T-cell (primary cell): ENCODE measurements at regions of chr4 and their contacts with region 1.

Region 1: GRCh38 chr4:98143001-98143899 is at the start of gene STPG2:
- DNase-seq: peak; percentile 82 to 96 (median 90)
- ATAC-seq: peak; percentile 98 to 100 (median 99)
- H3K4me3 ChIP-seq: peak within 1 kb of the TSS; percentile 62 to 67
- H3K4me3 Mint-ChIP-seq: peak within 1 kb of the TSS; percentile 89 to 95 (median 93)
- H3K27ac ChIP-seq: peak within 1 kb of the TSS; percentile 83
- H3K27ac Mint-ChIP-seq: peak within 1 kb of the TSS; percentile 98 to 99
- H3K4me1 ChIP-seq: peaks cover 5 to 12% of the 10 kb centered on the region in 2 experiments
- H3K4me1 Mint-ChIP-seq: peaks cover 21 to 26% (median 22%) of the 10 kb centered on the region in 3 donors
- H3K27me3 ChIP-seq: no peaks in the 10 kb centered on the region
- H3K27me3 Mint-ChIP-seq: no peaks in the 10 kb centered on the region
- total RNA-seq, gene STPG2: 0.19 to 0.35 (median 0.26) TPM in 3 of 5 donors, not detected in the others

Region 2: DNA sequence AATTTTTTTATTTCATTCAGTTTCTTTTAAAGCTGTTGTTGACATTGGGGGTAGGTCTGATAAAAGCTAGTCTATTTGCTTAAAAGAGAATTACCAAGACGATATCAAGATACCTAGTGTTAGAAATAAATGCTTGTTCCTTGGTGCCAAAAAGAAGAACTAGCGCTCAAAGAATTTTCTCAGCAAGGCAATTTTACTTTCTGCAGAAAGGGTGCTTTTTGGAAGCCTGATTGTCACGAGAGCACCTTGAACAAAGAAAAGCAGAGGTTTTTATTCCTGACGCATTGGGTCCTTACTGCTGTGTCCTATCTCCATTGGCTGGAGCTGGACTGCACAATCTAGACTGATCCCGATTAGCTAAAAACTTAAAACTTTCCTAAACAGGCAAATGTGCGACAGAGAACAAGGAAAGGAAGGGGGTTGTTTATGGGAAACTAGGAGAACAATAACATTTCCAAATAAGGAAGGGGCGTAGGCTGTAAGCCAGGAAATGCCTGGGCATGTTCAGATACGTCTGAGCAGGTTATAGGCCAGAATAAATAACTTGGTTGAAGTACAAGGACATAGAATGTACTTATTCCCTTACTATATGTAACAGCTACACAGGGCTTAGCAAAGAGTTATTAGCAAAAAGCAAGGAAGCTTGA is 50.3 kb after region 1 on chr4:
- CTCF ChIA-PET with region 1: no interaction called
- POLR2A ChIA-PET with region 1: no interaction called
- DNase-seq: no peak
- ATAC-seq: no peak
- H3K4me3 ChIP-seq: no peak overlapping the region
- H3K4me3 Mint-ChIP-seq: no peak overlapping the region
- H3K27ac ChIP-seq: no peak overlapping the region
- H3K27ac Mint-ChIP-seq: no peak overlapping the region
- H3K4me1 ChIP-seq: no peaks in the 10 kb centered on the region
- H3K4me1 Mint-ChIP-seq: no peaks in the 10 kb centered on the region
- H3K27me3 ChIP-seq: peaks cover 0 to 5% of the 10 kb centered on the region in 2 experiments
- H3K27me3 Mint-ChIP-seq: peaks cover 9 to 12% of the 10 kb centered on the region in 2 donors

Region 3: DNA sequence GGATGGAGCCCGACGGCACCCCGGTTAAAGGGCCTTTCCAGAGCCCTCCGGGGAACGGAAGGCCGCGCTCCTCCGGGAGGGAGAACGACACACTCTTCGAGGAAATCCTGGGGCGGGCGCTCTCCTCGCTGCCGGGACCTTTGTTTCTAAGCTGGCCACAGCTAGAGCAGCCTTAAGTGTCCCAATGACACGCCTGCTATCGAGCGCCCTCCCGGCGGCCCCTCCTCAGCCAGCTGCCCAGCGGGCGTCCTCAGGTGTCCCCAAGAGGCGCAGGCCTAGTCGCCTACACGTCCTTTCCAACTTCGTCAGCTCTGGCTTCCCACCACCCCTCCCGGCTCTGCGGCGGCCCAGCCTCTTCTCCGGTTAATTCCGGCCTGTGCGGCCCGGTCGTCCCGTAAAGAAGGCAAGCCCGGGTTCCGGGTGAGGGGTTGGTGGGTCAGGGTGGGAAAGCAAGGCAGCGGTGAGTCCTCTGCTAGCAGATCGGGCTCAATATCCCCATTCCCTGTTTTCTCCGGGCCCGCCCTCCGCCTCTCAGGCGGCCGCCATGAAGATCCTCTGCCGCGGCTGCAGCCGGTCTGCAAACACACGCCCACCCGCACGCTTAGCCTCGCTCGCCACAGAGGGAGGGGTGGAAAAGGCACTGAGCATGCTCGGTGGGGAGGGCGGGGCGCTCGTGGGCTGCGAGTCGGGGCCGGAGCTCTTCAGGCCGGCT is 117.5 kb after region 1 on chr4:
- CTCF ChIA-PET with region 1: interaction called in 1 of 2 experiments, 11 read pairs
- POLR2A ChIA-PET with region 1: no interaction called
- DNase-seq: peak in 30 of 35 experiments; percentile 8 to 93 (median 74)
- ATAC-seq: peak; percentile 78 to 87 (median 85)
- H3K4me3 ChIP-seq: peak overlapping the region; percentile 95 to 98
- H3K4me3 Mint-ChIP-seq: peak overlapping the region; percentile 92 to 97 (median 94)
- H3K27ac ChIP-seq: peak overlapping the region; percentile 87
- H3K27ac Mint-ChIP-seq: peak overlapping the region; percentile 96 to 97
- H3K4me1 ChIP-seq: peaks cover 14 to 23% of the 10 kb centered on the region in 2 experiments
- H3K4me1 Mint-ChIP-seq: peaks cover 48 to 54% (median 49%) of the 10 kb centered on the region in 3 donors
- H3K27me3 ChIP-seq: no peaks in the 10 kb centered on the region
- H3K27me3 Mint-ChIP-seq: no peaks in the 10 kb centered on the region